CD4-positive, alpha-beta memory T cell (primary cell): ENCODE measurements at regions of chr1 and their contacts with region 1.

Region 1: GRCh38 chr1:26921540-26922430 is at the start of gene NUDC:
- DNase-seq: peak; percentile 94 to 97 (median 96)
- H3K4me3 ChIP-seq: peak within 1 kb of the TSS; percentile 19 to 78
- H3K4me3 Mint-ChIP-seq: peak within 1 kb of the TSS; percentile 87 to 99 (median 96)
- H3K27ac ChIP-seq: peak within 1 kb of the TSS; percentile 82
- H3K27ac Mint-ChIP-seq: peak within 1 kb of the TSS; percentile 91 to 99 (median 98)
- H3K4me1 ChIP-seq: peaks cover 24% of the 10 kb centered on the region
- H3K4me1 Mint-ChIP-seq: peaks cover 23 to 46% (median 31%) of the 10 kb centered on the region in 4 donors
- H3K27me3 ChIP-seq: no peaks in the 10 kb centered on the region
- H3K27me3 Mint-ChIP-seq: no peaks in the 10 kb centered on the region
- total RNA-seq, gene NUDC: 42.0 to 43.0 TPM

Region 2: GRCh38 chr1:26900001-26900814 is 21.6 kb before region 1 on chr1 and contains the start of gene GPATCH3:
- CTCF ChIA-PET with region 1: interaction called, 3 read pairs
- POLR2A ChIA-PET with region 1: interaction called, 22 read pairs
- intact Hi-C with region 1: loop called (anchors 1 kb)
- DNase-seq: peak; percentile 87 to 89 (median 88)
- H3K4me3 ChIP-seq: peak within 1 kb of the TSS; percentile 86 to 93
- H3K4me3 Mint-ChIP-seq: peak within 1 kb of the TSS; percentile 87 to 100 (median 96)
- H3K27ac ChIP-seq: peak within 1 kb of the TSS; percentile 90
- H3K27ac Mint-ChIP-seq: peak within 1 kb of the TSS; percentile 92 to 100 (median 98)
- H3K4me1 ChIP-seq: peaks cover 25% of the 10 kb centered on the region
- H3K4me1 Mint-ChIP-seq: peaks cover 21 to 48% (median 26%) of the 10 kb centered on the region in 4 donors
- H3K27me3 ChIP-seq: no peaks in the 10 kb centered on the region
- H3K27me3 Mint-ChIP-seq: no peaks in the 10 kb centered on the region
- total RNA-seq, gene GPATCH3: 25.0 to 26.7 TPM

Region 3: DNA sequence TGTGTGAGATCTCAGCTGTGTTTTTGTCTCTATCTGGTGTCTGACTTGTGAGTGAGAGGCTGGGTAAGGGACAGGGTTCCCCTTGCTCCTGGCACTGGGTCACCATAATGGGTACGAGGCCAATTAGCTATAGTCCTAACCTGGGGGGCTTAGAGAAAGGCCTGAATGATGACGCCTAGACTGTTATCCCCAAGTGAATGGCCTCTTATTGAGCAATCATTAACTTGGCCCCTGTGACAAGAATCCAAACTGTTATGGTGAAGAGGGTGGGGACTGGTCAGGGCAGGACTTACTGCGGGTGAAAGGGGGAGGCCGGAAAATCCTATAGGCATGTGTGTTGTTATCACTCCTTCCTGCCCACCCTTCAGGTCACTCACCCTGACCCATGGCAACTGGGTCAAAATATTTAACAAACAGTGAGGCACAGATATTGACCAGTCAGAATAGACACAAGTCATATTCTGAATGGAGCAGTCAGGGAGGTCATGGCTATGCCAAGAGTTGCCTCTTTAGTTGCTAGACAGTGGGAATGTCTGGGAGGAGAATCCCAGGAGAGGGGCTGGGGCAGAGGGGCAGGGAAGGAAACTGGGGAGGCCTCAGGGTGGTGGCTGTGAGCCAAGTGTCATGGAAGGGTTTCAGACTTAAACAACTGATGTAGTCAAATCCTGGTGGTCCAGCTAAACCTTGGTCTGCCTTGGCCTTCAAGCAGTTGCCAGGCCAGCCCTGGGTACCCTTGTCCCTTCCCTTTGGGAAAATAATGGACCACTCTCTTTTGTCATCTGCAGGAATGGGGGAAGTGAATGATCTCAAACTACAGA is 11.2 kb before region 1 on chr1:
- CTCF ChIA-PET with region 1: no interaction called
- POLR2A ChIA-PET with region 1: no interaction called
- intact Hi-C with region 1: no loop called
- DNase-seq: no peak
- H3K4me3 ChIP-seq: no peak overlapping the region
- H3K4me3 Mint-ChIP-seq: no peak overlapping the region
- H3K27ac ChIP-seq: no peak overlapping the region
- H3K27ac Mint-ChIP-seq: no peak overlapping the region
- H3K4me1 ChIP-seq: no peaks in the 10 kb centered on the region
- H3K4me1 Mint-ChIP-seq: no peaks in the 10 kb centered on the region
- H3K27me3 ChIP-seq: no peaks in the 10 kb centered on the region
- H3K27me3 Mint-ChIP-seq: peaks cover 0 to 5% of the 10 kb centered on the region in 2 donors

Region 4: DNA sequence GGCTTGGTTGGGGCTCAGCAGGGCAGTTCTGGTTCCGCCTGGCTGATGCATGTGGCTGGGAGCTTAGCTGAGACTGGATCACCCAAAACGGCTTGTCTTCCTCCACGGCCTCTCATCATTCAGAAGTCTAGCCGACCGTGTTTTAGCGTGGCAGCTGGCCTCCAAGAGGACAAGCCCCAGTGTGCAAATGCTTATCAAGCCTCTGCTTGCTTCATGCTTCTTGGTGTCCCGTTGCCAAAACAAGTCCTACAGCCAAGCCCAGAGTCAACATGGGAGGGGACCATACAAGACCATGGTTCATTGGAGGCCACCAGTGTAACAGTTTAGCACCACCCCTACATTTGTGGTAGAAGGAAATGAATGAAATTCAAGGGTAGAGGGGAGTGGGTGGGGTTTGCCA is 49.0 kb after region 1 on chr1:
- CTCF ChIA-PET with region 1: no interaction called
- POLR2A ChIA-PET with region 1: no interaction called
- intact Hi-C with region 1: no loop called
- DNase-seq: no peak
- H3K4me3 ChIP-seq: no peak overlapping the region
- H3K4me3 Mint-ChIP-seq: no peak overlapping the region
- H3K27ac ChIP-seq: no peak overlapping the region
- H3K27ac Mint-ChIP-seq: no peak overlapping the region
- H3K4me1 ChIP-seq: no peaks in the 10 kb centered on the region
- H3K4me1 Mint-ChIP-seq: no peaks in the 10 kb centered on the region
- H3K27me3 ChIP-seq: no peaks in the 10 kb centered on the region
- H3K27me3 Mint-ChIP-seq: peaks cover 13 to 14% of the 10 kb centered on the region in 2 donors